Cardiac septum (tissue), 1 donor: ENCODE measurements at regions of chr4 and their contacts with region 1.

Region 1: GRCh38 chr4:125314676-125315575 is at the start of gene FAT4:
- DNase-seq: peak; percentile 96
- total RNA-seq, gene FAT4: 18.6 TPM

Region 2: DNA sequence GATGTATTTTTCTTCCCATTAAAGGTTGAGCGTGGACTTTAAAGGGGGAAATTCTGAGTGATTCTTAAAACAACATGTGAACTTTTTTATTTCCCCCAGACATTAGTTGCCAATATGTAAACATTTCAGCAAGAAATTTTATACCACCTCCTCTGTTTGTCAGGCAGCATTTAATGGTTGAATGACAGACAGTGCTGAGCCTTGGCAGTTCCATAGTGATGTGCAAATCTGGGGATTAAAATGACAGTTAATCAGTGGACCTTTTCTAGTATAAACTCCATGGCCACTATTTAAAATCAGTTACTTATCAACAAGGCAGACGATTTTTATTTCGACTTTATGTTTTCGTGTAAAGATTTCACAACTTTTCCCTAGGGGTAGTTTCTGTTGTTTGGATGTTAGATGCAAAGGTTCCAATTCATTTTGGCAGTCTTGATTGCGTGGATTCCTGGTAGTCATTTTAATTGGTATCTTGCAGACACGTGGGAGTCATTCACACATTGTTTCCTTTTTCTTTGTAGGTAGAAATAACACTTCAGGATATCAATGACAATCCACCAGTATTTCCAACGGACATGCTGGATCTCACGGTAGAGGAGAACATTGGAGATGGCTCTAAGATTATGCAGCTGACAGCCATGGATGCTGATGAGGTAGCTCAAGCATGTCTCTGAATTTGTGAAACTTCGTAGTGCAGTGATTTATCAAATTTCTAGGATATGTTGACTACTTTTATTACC is 83.5 kb after region 1 on chr4:
- intact Hi-C with region 1: loop called (anchors 2 kb)
- DNase-seq: no peak

Region 3: DNA sequence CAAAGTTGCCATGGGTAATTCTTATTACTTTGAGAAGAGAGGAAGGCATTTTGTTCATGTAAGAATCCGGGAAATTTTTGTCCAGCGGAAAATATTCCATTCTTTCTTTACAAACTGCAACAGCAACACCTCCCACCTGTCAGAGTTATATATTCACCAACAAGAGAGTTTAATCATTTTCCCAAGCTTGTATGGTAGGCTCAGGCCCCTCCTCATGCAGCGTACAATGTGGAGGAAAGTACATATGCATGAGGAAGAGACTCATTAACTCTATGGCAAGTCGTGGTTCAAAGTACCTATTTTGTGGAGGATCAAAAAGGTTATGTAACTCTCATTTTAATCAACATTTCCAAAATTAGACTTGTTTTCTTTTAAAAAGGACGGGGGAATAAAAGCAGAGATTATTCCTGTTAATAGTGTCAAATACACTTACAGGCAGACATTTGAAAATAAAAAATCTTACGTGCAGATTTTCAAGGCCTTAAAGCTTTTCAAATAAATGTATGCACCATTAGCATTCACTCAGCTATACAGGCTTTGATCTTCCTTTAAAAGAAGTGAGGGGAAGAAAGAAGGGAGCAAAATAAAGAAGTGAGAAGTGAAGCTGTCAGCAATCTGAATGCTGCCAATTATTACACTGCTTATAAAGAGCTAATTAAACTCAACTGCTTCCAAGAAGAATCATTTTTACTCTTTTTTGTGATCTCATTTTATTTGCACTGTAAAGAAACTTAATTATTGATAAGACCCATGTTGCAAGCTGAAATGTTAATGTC is 204.6 kb after region 1 on chr4:
- intact Hi-C with region 1: loop called (anchors 10 kb)
- DNase-seq: no peak

Region 4: GRCh38 chr4:125741825-125742452 is 427.0 kb after region 1 on chr4:
- intact Hi-C with region 1: loop called (anchors 1 kb)
- DNase-seq: no peak

Region 5: GRCh38 chr4:126604268-126604867 is 1289.4 kb after region 1 on chr4:
- intact Hi-C with region 1: loop called (anchors 10 kb)
- DNase-seq: no peak